Activated T-helper 2 cell treated with anti-CD3 and anti-CD28 coated beads, Interferon-gamma antibody, Interleukin-2, Interleukin-4, amounts not matched to agents 10 μg/mL and 5 μg/mL and 100 μg/mL, durations not matched to agents 14 hours and 24 hours and 36 hours (primary cell): ENCODE measurements at regions of chr2 and their contacts with region 1.

Region 1: GRCh38 chr2:17879101-17879912 is 840 bp downstream of the KCNS3 start:
- DNase-seq: no peak
- H3K4me3 Mint-ChIP-seq: peak overlapping the region; percentile 67
- H3K27ac Mint-ChIP-seq: no peak overlapping the region
- H3K4me1 Mint-ChIP-seq: peaks cover 3% of the 10 kb centered on the region
- H3K27me3 Mint-ChIP-seq: peaks cover 61% of the 10 kb centered on the region

Region 2: DNA sequence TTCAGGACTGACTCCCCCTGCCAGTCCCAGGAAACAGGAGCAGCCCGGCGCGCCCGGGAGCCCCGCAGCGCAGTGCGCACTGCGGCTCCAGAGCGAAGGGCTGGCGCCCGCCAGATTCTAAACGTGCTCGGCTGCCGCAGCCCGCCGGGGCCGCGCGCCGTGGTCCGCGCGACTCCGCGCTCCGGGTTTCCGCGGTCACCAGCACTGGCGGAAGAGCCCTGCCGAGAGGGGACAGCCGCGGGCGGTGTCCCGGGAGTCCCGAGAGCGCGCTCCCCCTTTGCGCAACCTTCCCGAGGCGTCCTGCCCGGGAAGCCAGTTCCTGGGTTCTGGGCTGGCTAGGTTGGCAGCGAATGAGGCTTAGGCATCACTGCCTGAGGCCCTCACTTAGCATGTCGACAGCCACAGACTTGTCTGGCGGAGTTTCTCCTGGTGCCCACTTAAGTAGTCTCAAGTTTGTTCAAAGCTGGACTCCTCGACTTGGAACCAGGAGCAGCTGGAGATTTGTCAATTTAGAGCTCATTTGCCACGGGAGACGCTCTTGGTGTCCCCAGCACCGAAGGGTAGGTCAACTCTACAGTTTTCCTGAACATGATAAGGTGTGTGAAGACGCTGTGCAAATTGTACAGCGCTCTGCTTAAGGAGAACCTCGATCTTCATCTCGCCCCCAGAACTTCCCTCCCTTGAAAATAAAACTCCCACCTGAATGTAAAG is 340.3 kb before region 1 on chr2:
- intact Hi-C with region 1: loop called (anchors 5 kb)
- DNase-seq: no peak
- H3K4me3 Mint-ChIP-seq: no peak overlapping the region
- H3K27ac Mint-ChIP-seq: no peak overlapping the region
- H3K4me1 Mint-ChIP-seq: peaks cover 8% of the 10 kb centered on the region
- H3K27me3 Mint-ChIP-seq: peaks cover 66% of the 10 kb centered on the region

Region 3: DNA sequence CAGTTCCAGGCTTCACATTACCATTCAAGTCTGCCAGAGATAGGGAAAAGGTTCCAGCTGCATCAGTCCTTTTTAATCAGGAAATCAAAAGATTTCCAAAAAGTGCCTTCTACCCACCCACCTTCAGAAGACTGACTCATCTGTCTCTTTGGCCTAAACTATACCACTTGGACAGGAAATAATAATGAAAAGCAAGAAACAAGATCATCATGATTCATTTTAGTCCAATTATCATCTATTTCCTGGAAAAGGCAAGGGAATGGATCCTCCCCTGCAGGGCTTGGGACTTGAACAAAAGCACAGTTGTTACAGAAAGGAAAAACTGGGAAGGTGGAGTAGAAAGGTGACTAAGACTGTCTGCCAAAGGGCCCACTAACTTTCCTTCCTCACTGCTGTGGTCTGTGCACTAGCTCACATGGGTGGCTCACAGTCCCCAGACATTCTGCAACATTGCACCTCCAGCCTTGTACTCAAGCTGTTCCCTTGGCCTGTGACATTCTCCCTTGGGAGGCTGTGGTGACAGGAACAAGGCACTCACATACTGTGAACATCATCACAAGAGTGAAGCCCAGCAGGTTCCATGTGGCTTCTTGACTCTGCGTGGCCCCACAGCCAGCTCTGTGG is 263.5 kb before region 1 on chr2:
- intact Hi-C with region 1: no loop called
- DNase-seq: no peak
- H3K4me3 Mint-ChIP-seq: no peak overlapping the region
- H3K27ac Mint-ChIP-seq: no peak overlapping the region
- H3K4me1 Mint-ChIP-seq: peaks cover 4% of the 10 kb centered on the region
- H3K27me3 Mint-ChIP-seq: peaks cover 4% of the 10 kb centered on the region

Region 4: GRCh38 chr2:17976871-17977746 is 97.8 kb after region 1 on chr2:
- intact Hi-C with region 1: no loop called
- DNase-seq: no peak
- H3K4me3 Mint-ChIP-seq: no peak overlapping the region
- H3K27ac Mint-ChIP-seq: no peak overlapping the region
- H3K4me1 Mint-ChIP-seq: no peaks in the 10 kb centered on the region
- H3K27me3 Mint-ChIP-seq: no peaks in the 10 kb centered on the region